Heart right ventricle (tissue), 16 donors: ENCODE measurements at regions of chr5 and their contacts with region 1.

Region 1: GRCh38 chr5:27511061-27511460 is 472.7 kb upstream of the CDH9 start:
- DNase-seq: no peak
- ATAC-seq: no peak
- H3K4me3 ChIP-seq: no peak overlapping the region
- H3K27ac ChIP-seq: no peak overlapping the region
- H3K4me1 ChIP-seq: no peaks in the 10 kb centered on the region
- H3K27me3 ChIP-seq: no peaks in the 10 kb centered on the region
- CTCF ChIP-seq: no peak

Region 2: DNA sequence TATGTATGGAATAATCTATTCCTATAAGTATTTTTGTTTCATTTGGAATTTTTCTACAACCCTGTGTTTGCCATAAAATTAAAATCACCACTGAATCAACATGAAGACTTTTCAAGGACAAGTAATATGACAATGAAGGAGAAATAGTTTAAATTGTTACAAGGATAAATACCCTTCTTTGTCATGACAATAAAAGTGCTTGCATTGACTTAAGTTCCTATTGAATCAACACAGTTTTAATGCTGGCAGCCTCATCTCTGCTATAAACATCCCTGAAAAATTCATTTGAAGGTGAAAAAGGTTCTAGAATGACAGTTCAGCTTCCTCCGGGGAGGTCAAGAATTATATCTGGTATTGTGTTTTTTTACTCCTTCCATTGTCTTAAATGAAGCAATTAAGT is 632.5 kb after region 1 on chr5:
- intact Hi-C with region 1: loop called in 1 of 10 experiments (anchors 5 kb)
- DNase-seq: no peak
- ATAC-seq: no peak
- H3K4me3 ChIP-seq: no peak overlapping the region
- H3K27ac ChIP-seq: no peak overlapping the region
- H3K4me1 ChIP-seq: no peaks in the 10 kb centered on the region
- H3K27me3 ChIP-seq: no peaks in the 10 kb centered on the region
- CTCF ChIP-seq: no peak